SK-N-SH (cell line): ENCODE measurements at regions of chr1 and their contacts with region 1.

Region 1: DNA sequence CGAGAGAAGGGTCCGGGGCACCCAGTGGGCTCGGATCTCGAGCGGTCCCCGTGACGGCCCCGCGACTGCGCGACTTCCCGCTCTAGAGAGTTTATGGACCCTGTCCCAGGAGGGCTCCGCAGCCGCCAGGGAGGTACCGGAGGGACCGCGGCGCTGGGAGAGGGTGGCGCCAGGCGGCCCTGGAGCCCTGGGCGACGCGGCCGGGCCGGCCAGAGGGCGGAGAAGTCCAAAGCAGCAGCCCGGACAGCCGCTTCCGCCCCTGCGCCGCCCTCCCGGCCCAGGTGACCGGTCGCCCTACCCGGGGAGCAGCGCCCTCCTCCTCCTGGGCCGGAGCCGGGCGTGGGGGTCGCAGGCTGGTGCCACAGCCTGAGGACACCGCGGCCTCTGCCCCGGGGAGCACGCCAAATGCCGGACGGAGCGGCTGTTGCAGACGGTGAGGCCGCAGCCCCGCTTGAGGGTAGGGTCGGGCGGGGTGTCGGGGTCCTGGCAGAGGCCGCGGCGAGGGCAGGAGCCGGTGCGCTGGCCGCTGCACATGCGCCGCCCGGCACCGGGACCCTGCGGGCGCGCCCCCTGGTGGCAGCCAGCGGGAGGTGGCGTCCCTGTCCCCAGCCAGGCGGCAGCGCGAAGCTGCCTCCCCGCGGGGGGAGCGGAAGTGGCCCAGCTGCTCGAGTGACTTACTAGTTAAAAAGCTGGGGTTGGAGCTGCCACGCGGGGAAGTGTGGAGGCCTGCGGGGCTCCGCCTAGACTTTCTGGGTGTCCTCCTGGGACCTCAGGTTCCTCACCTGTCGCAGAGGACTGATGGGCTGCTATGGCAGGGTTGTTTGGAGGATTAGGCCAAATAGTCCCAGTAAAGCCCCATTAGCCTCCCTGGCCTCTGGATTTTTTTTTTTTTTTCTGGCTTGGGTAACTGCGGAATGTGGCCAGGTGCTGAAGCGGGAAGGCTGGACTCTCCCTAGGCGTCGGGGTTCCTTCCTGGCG is 20.9 kb upstream of the ZNF678 start:
- DNase-seq: peak; percentile 96
- H3K4me3 ChIP-seq: peak overlapping the region; percentile 62 to 83
- H3K27ac ChIP-seq: peak overlapping the region in 1 of 2 experiments; percentile 86; a peak in 2 of 4 replicates
- H3K4me1 ChIP-seq: peaks cover 0 to 15% of the 10 kb centered on the region in 2 experiments; a peak in 3 of 4 replicates
- H3K27me3 ChIP-seq: no peaks in the 10 kb centered on the region
- CTCF ChIP-seq: peak; percentile 78
- EP300 ChIP-seq: no peak; a peak in 1 of 4 replicates
- RAD21 ChIP-seq: peak; percentile 47

Region 2: GRCh38 chr1:227482023-227482299 is 60.5 kb before region 1 on chr1:
- CTCF ChIA-PET with region 1: interaction called, 13 read pairs
- POLR2A ChIA-PET with region 1: no interaction called
- DNase-seq: no peak
- H3K4me3 ChIP-seq: no peak overlapping the region
- H3K27ac ChIP-seq: no peak overlapping the region
- H3K4me1 ChIP-seq: no peaks in the 10 kb centered on the region
- H3K27me3 ChIP-seq: no peaks in the 10 kb centered on the region
- CTCF ChIP-seq: no peak
- EP300 ChIP-seq: no peak
- RAD21 ChIP-seq: no peak

Region 3: DNA sequence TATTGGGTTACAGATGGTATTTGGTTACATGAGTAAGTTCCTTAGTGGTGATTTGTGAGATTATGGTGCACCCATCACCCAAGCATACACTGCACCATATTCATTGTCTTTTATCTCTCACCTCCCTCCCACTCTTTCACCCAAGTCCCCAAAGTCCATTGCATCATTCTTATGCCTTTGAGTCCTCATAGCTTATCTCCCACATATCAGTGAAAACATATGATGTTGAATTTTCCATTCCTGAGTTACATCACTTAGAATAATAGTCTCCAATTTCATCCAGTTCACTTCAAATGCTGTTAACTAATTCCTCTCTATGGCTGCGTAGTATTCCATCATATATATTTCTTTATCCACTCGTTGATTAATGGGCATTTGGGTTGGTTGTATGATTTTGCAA is 15.9 kb before region 1 on chr1:
- CTCF ChIA-PET with region 1: interaction called, 17 read pairs
- POLR2A ChIA-PET with region 1: no interaction called
- DNase-seq: no peak
- H3K4me3 ChIP-seq: no peak overlapping the region
- H3K27ac ChIP-seq: no peak overlapping the region
- H3K4me1 ChIP-seq: no peaks in the 10 kb centered on the region
- H3K27me3 ChIP-seq: no peaks in the 10 kb centered on the region
- CTCF ChIP-seq: no peak
- EP300 ChIP-seq: no peak
- RAD21 ChIP-seq: no peak